Cardiac septum (tissue), 1 donor: ENCODE measurements at regions of chr2 and their contacts with region 1.

Region 1: GRCh38 chr2:42964439-42965083 is 172.2 kb upstream of the HAAO start:
- DNase-seq: peak; percentile 84

Region 2: GRCh38 chr2:43073368-43073767 is 108.8 kb after region 1 on chr2:
- intact Hi-C with region 1: loop called (anchors 5 kb)
- DNase-seq: peak; percentile 74

Region 3: DNA sequence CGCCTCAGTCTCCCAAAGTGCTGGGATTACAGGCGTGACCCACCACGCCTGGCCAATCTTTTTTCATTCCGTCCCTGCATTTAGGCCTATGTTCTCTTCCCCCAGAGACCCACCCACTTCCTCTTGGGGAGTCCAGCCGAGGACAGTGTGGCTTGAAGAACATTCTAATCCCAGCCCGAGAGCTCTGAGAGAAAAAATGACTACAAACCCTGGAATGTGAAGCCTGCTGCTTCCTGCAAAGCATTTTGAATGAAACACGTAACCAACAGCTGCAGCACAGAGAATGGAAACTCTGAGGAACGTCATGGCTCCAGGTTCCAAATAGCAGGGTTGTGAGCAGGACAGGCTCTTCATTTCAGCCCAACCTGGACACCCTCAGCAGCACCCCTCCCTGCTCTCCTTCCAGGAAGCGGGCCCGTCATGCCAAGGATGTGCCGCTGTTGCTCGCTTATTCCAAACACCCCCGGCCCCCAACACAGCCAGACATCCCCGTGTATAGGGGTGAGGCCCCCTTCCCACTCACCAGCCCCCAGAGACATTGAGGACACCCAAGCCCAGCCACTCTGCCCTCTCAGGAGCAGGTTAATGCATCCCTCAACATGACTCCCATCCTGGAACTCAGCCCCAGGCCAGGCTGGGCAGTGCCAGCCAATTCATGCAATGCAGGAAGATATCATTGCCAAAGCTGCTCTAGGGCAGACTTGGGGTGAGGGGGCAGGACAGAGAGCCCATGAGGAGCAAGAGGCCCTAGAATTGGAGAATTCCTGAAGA is 122.1 kb after region 1 on chr2:
- intact Hi-C with region 1: loop called (anchors 5 kb)
- DNase-seq: peak; percentile 81